Breast epithelium (tissue), 4 donors: ENCODE measurements at regions of chrX and their contacts with region 1.

Region 1: DNA sequence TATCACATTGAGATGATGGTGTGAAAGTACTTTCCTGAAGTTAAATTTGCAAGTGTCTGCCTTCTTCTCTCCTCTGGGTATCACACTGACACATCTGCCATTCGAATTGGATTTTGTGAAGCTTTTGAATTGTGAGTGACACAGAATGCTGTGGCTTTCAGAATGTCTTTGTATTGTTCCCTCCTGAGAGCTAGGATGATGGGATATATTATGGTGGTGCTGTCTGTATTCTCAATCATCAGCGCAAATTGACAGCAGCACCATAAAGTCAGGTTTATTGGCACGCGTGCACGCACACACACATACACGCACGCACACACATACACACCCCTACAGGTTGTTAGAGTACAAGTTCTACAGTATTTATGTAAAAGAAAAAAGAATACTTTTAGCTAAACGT is 143.3 kb downstream of the AWAT2 start:
- DNase-seq: no peak
- H3K4me3 ChIP-seq: no peak overlapping the region
- H3K27ac ChIP-seq: no peak overlapping the region
- H3K4me1 ChIP-seq: no peaks in the 10 kb centered on the region
- H3K27me3 ChIP-seq: peaks cover 0 to 29% of the 10 kb centered on the region in 2 donors
- CTCF ChIP-seq: no peak
- POLR2A ChIP-seq: no peak

Region 2: GRCh38 chrX:68832101-68832416 is 1074.4 kb before region 1 on chrX:
- intact Hi-C with region 1: loop called (anchors 5 kb)
- DNase-seq: no peak
- H3K4me3 ChIP-seq: peak overlapping the region; percentile 67 to 82 (median 72)
- H3K27ac ChIP-seq: peak overlapping the region; percentile 21 to 36
- H3K4me1 ChIP-seq: no peaks in the 10 kb centered on the region
- H3K27me3 ChIP-seq: peaks cover 0 to 54% of the 10 kb centered on the region in 2 donors
- CTCF ChIP-seq: no peak
- POLR2A ChIP-seq: no peak